ENCODE measurements at regions of chr5 and their contacts with region 1.

Region 1: DNA sequence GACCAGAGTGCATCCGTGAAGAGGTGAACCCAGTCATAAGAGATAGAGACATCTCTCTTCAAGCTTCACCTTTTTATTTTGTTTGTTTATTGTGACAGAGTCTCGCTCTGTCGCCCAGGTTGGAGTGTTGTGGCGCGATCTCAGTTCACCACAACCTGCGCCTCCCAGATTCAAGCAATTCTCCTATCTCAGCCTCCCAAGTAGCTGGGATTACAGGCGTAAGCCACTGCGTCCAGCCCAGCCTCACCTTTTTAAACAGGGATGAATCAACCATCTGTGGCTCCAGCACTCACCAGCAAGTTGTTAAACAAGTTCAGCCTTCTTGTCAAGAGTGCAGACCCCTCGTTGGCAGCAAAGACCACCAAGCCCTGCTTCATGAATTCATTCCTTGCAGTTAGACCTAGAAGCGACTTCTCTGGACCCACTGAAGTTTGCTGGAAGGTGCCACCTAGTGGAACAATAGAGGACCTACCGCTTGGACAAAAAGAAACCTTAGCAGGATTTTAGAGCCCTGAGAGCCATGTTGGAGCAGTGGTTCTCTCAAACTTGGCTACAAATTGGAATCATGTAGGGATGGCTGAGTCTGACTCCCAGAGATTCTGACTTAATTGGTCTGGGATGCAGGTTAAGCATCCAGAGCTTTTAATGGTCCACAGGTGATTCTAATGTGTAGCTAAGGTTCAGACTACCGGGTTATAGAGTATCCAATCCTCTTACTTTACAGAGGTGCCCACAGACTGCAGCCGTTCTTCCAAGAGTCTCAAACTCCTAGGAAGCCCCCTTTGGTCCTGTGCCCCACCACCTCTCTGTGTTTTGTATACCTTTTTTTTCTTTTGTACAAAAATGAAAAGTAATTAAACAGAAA is 10.5 kb upstream of the GALNT10 start:
- DNase-seq: peak; percentile 81
- H3K4me3 Mint-ChIP-seq: no peak overlapping the region
- H3K27ac Mint-ChIP-seq: no peak overlapping the region
- H3K4me1 Mint-ChIP-seq: peaks cover 9% of the 10 kb centered on the region
- H3K27me3 Mint-ChIP-seq: peaks cover 41% of the 10 kb centered on the region
- CTCF ChIP-seq: peak; percentile 88

Region 2: GRCh38 chr5:152532714-152533113 is 1647.4 kb before region 1 on chr5:
- CTCF ChIA-PET with region 1: interaction called, 3 read pairs
- POLR2A ChIA-PET with region 1: no interaction called
- intact Hi-C with region 1: loop called (anchors 5 kb)
- DNase-seq: peak; percentile 75
- H3K4me3 Mint-ChIP-seq: no peak overlapping the region
- H3K27ac Mint-ChIP-seq: peak overlapping the region; percentile 24
- H3K4me1 Mint-ChIP-seq: no peaks in the 10 kb centered on the region
- H3K27me3 Mint-ChIP-seq: no peaks in the 10 kb centered on the region
- CTCF ChIP-seq: peak; percentile 80

Region 3: GRCh38 chr5:154065971-154066370 is 114.1 kb before region 1 on chr5:
- CTCF ChIA-PET with region 1: interaction called, 355 read pairs
- POLR2A ChIA-PET with region 1: no interaction called
- intact Hi-C with region 1: no loop called
- DNase-seq: no peak
- H3K4me3 Mint-ChIP-seq: no peak overlapping the region
- H3K27ac Mint-ChIP-seq: no peak overlapping the region
- H3K4me1 Mint-ChIP-seq: no peaks in the 10 kb centered on the region
- H3K27me3 Mint-ChIP-seq: no peaks in the 10 kb centered on the region
- CTCF ChIP-seq: no peak

Region 4: DNA sequence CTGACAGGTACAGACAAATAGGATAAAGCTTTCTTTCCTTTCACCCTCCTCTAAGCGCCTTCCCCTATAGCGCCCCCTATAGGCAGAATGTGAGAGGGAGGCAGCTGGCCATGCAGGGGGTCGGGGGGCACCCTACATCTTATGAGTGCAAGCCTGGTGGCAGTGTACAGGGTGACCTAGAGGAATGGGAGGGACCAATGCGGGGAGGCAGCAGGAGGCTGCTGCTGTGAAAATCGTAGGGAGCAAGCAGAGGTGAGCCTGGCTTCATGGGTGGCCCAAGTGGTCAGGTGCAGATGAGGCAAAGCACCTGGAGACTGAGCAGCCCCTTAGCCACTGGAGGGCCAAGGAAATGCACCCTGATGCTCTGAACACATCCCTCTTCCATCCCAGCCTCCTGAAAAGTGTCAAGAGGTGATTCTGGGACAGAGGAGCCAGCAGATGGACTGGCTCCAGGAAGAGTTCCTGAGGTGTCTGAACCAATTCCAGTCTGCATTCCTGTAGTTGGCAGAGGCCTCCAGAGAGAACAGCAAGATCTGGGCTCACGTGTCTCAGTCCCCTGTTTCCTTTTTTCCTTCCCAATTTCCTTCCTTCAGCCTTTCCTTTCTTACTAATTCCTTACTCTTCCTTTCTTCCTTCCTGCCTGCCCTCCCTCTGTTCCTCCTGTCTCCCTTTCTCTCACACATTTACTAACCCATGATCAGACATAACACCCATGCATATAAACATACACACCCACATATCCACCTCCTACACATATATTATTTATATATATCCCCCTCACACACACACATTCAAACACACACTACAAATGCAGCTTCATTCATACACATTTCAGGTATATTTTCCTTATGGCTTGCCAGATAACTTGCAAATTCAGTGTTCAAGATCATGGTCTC is 22.3 kb before region 1 on chr5:
- CTCF ChIA-PET with region 1: interaction called, 21 read pairs
- POLR2A ChIA-PET with region 1: no interaction called
- intact Hi-C with region 1: no loop called
- DNase-seq: no peak
- H3K4me3 Mint-ChIP-seq: no peak overlapping the region
- H3K27ac Mint-ChIP-seq: no peak overlapping the region
- H3K4me1 Mint-ChIP-seq: peaks cover 18% of the 10 kb centered on the region
- H3K27me3 Mint-ChIP-seq: peaks cover 8% of the 10 kb centered on the region
- CTCF ChIP-seq: peak; percentile 57

Region 5: DNA sequence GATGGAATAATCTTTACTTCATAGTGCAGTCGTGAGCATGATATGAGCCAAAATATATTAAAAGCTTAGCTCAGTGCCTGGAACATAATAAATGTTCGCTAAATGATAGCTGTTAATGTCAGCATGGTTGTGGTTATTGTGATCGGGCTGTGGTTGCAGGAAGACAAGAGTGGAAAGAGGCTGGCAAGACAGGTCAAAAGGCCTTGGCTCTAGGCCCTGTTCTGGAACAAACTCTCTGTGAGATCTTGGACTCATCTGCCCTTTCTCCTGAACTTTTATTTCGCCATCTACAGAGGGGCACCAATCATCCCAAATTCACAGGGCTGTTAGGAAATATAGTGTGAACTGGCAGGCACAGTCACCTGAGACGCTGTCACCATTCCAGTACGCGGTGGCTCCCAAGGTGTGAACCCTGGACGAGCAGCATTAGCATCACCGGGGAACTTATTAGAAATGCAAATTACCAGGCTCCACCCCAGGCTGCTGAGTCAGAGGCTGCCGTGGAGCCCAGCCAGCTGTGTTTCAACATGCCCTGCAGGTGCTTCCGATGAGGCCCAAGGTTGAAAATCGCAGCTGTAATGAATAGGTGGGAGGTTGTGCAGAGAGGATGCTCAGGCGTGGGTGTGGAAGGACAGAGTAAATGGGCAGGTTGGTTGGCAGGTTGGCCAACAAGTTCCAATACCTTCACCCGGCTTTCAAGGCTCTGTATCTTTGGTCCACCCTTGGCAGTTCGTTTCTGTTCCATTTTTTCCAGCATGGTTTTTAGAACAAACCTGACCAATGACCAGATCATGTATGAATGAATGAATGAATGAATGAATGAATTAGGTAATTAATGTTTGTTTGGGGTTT is 215.6 kb after region 1 on chr5:
- CTCF ChIA-PET with region 1: interaction called, 13 read pairs
- POLR2A ChIA-PET with region 1: no interaction called
- intact Hi-C with region 1: no loop called
- DNase-seq: peak; percentile 97
- H3K4me3 Mint-ChIP-seq: peak overlapping the region; percentile 37
- H3K27ac Mint-ChIP-seq: peak overlapping the region; percentile 6
- H3K4me1 Mint-ChIP-seq: peaks cover 34% of the 10 kb centered on the region
- H3K27me3 Mint-ChIP-seq: no peaks in the 10 kb centered on the region
- CTCF ChIP-seq: no peak